K562 (cell line): ENCODE measurements at regions of chr10 and their contacts with region 1.

Region 1: DNA sequence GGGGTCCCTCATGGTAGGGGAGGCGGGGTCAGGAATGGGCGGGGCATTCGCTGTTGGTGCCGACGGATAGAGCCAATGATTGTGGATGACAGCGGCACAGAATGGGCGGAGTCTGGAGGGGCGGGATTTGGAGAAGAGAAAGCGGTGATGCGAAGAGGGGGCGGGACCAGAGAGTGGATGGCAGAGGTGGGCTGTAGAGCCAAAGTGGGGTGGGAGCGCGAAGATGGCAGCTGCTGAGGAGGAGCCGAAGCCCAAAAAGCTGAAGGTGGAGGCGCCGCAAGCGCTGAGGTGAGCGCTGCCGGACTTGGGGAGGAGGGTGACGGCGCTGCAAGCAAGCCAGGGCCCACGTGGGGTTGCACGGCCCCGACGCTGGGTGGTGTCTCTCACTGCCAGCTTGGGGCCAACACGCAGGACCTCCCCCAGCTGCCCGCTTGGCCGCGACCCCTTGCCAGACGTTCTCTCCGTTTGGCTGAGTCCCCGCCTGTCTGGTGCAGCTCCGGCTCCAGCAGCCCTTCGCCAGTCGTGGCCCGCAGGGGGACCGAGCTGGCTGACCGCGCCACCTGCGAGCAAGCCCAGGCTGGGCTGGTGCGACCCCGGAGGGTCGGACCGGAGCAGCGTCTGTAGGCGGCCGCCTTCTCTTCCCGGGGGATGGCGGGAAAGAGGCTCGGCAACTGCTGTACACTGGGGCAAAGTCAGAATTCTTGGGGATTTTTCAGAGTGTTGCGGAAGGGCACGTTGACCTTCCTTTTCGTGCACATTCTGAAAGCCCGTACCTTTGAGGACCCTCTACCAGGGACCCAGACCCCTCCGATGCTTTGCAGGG is at the start of gene ADK:
- DNase-seq: peak; percentile 99 to 100 (median 100)
- ATAC-seq: peak; percentile 93
- H3K4me3 ChIP-seq: peak within 1 kb of the TSS; percentile 93
- H3K27ac ChIP-seq: peak within 1 kb of the TSS; percentile 94
- H3K4me1 ChIP-seq: peaks cover 5 to 22% of the 10 kb centered on the region in 2 experiments; a peak in 4 of 5 replicates
- H3K27me3 ChIP-seq: no peaks in the 10 kb centered on the region
- CTCF ChIP-seq: peak; percentile 39 to 48 (median 43); a peak in 5 of 6 replicates
- EP300 ChIP-seq: no peak
- POLR2A ChIP-seq: peak; percentile 87
- RAD21 ChIP-seq: peak in 1 of 2 experiments; percentile 41; a peak in 1 of 4 replicates
- polyA plus RNA-seq, gene ADK: 83.6 to 97.8 TPM

Region 2: DNA sequence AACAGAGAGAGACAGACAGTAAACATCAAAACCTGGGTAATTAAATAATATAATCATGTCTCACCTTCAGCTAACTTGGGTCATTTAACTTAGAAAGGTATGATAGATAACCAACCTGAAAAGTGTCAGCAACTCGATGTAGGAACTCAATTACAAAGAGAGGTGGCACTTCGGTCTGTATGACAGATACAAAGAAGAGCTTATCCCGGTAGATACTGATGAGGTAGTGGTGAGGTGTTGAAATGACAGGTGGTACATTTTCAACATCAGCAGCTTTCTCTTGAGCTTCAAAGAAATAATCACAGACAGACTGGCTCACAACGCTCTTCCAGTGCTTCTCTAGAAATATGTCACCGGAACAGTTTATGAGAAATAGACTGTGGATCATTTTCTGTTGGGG is 13.3 kb before region 1 on chr10:
- CTCF ChIA-PET with region 1: no interaction called
- POLR2A ChIA-PET with region 1: interaction called, 10 read pairs
- in situ Hi-C with region 1: no loop called
- intact Hi-C with region 1: no loop called
- DNase-seq: peak in 1 of 4 experiments; percentile 33
- ATAC-seq: no peak
- H3K4me3 ChIP-seq: no peak overlapping the region
- H3K27ac ChIP-seq: no peak overlapping the region
- H3K4me1 ChIP-seq: peaks cover 0 to 4% of the 10 kb centered on the region in 2 experiments; a peak in 1 of 5 replicates
- H3K27me3 ChIP-seq: no peaks in the 10 kb centered on the region
- CTCF ChIP-seq: no peak
- EP300 ChIP-seq: no peak
- POLR2A ChIP-seq: no peak
- RAD21 ChIP-seq: no peak

Region 3: GRCh38 chr10:74176380-74177139 is 25.3 kb after region 1 on chr10:
- CTCF ChIA-PET with region 1: no interaction called
- POLR2A ChIA-PET with region 1: interaction called, 18 read pairs
- in situ Hi-C with region 1: no loop called
- intact Hi-C with region 1: loop called (anchors 2 kb)
- DNase-seq: peak; percentile 95 to 97 (median 97)
- ATAC-seq: peak; percentile 93
- H3K4me3 ChIP-seq: peak overlapping the region; percentile 73
- H3K27ac ChIP-seq: peak overlapping the region; percentile 93
- H3K4me1 ChIP-seq: peaks cover 13 to 17% of the 10 kb centered on the region in 2 experiments; a peak in 4 of 5 replicates
- H3K27me3 ChIP-seq: no peaks in the 10 kb centered on the region
- CTCF ChIP-seq: no peak
- EP300 ChIP-seq: no peak
- POLR2A ChIP-seq: peak; percentile 95
- RAD21 ChIP-seq: no peak

Region 4: GRCh38 chr10:74213571-74214162 is 62.4 kb after region 1 on chr10:
- CTCF ChIA-PET with region 1: no interaction called
- POLR2A ChIA-PET with region 1: interaction called, 3 read pairs
- in situ Hi-C with region 1: no loop called
- intact Hi-C with region 1: loop called (anchors 1 kb)
- DNase-seq: peak; percentile 52 to 54 (median 54)
- ATAC-seq: peak; percentile 77
- H3K4me3 ChIP-seq: no peak overlapping the region
- H3K27ac ChIP-seq: no peak overlapping the region
- H3K4me1 ChIP-seq: no peaks in the 10 kb centered on the region
- H3K27me3 ChIP-seq: no peaks in the 10 kb centered on the region
- CTCF ChIP-seq: peak; percentile 53 to 67 (median 54); a peak in 5 of 6 replicates
- EP300 ChIP-seq: no peak; the same call in 1 of the 2 replicates
- POLR2A ChIP-seq: no peak
- RAD21 ChIP-seq: peak; percentile 42 to 47

Region 5: GRCh38 chr10:74234569-74234968 is 83.3 kb after region 1 on chr10:
- CTCF ChIA-PET with region 1: interaction called, 5 read pairs
- POLR2A ChIA-PET with region 1: no interaction called
- in situ Hi-C with region 1: no loop called
- intact Hi-C with region 1: loop called (anchors 5 kb)
- DNase-seq: no peak
- ATAC-seq: no peak
- H3K4me3 ChIP-seq: no peak overlapping the region
- H3K27ac ChIP-seq: no peak overlapping the region
- H3K4me1 ChIP-seq: peaks cover 5 to 14% of the 10 kb centered on the region in 2 experiments; a peak in 4 of 5 replicates
- H3K27me3 ChIP-seq: no peaks in the 10 kb centered on the region
- CTCF ChIP-seq: peak in 1 of 3 experiments; percentile 64; a peak in 2 of 6 replicates
- EP300 ChIP-seq: no peak
- POLR2A ChIP-seq: no peak
- RAD21 ChIP-seq: peak; percentile 47 to 73